Sigmoid colon (tissue), 7 donors: ENCODE measurements at regions of chr18 and their contacts with region 1.

Region 1: GRCh38 chr18:64097497-64097896 is 51.4 kb downstream of the LINC00305 start:
- DNase-seq: no peak
- H3K4me3 ChIP-seq: no peak overlapping the region
- H3K27ac ChIP-seq: no peak overlapping the region
- H3K4me1 ChIP-seq: no peaks in the 10 kb centered on the region
- H3K27me3 ChIP-seq: no peaks in the 10 kb centered on the region
- CTCF ChIP-seq: no peak
- EP300 ChIP-seq: no peak
- POLR2A ChIP-seq: no peak

Region 2: GRCh38 chr18:64042728-64043358 is 54.7 kb before region 1 on chr18:
- intact Hi-C with region 1: no loop called
- DNase-seq: no peak
- H3K4me3 ChIP-seq: no peak overlapping the region
- H3K27ac ChIP-seq: no peak overlapping the region
- H3K4me1 ChIP-seq: no peaks in the 10 kb centered on the region
- H3K27me3 ChIP-seq: no peaks in the 10 kb centered on the region
- CTCF ChIP-seq: no peak
- EP300 ChIP-seq: no peak
- POLR2A ChIP-seq: no peak

Region 3: GRCh38 chr18:64134044-64134747 is 36.7 kb after region 1 on chr18:
- intact Hi-C with region 1: no loop called
- DNase-seq: no peak
- H3K4me3 ChIP-seq: no peak overlapping the region
- H3K27ac ChIP-seq: no peak overlapping the region
- H3K4me1 ChIP-seq: no peaks in the 10 kb centered on the region
- H3K27me3 ChIP-seq: no peaks in the 10 kb centered on the region
- CTCF ChIP-seq: no peak
- EP300 ChIP-seq: no peak
- POLR2A ChIP-seq: no peak

Region 4: GRCh38 chr18:65567372-65567771 is 1469.9 kb after region 1 on chr18:
- intact Hi-C with region 1: loop called (anchors 10 kb)
- DNase-seq: no peak
- H3K4me3 ChIP-seq: no peak overlapping the region
- H3K27ac ChIP-seq: no peak overlapping the region
- H3K4me1 ChIP-seq: no peaks in the 10 kb centered on the region
- H3K27me3 ChIP-seq: no peaks in the 10 kb centered on the region
- CTCF ChIP-seq: no peak
- EP300 ChIP-seq: no peak
- POLR2A ChIP-seq: no peak